Caco-2 (cell line): ENCODE measurements at regions of chr19 and their contacts with region 1.

Region 1: GRCh38 chr19:12806239-12807081 is at the start of gene RNASEH2A:
- DNase-seq: peak; percentile 84 to 90
- H3K4me3 ChIP-seq: peak within 1 kb of the TSS; percentile 73
- H3K4me3 Mint-ChIP-seq: peak within 1 kb of the TSS; percentile 99
- H3K27ac Mint-ChIP-seq: peak within 1 kb of the TSS; percentile 84
- H3K4me1 ChIP-seq: peaks cover 8% of the 10 kb centered on the region; the same call in 1 of the 2 replicates
- H3K4me1 Mint-ChIP-seq: peaks cover 7% of the 10 kb centered on the region
- H3K27me3 ChIP-seq: no peaks in the 10 kb centered on the region
- H3K27me3 Mint-ChIP-seq: no peaks in the 10 kb centered on the region
- CTCF ChIP-seq: no peak
- total RNA-seq, gene RNASEH2A: 30.9 and 37.6 TPM in 2 replicates

Region 2: DNA sequence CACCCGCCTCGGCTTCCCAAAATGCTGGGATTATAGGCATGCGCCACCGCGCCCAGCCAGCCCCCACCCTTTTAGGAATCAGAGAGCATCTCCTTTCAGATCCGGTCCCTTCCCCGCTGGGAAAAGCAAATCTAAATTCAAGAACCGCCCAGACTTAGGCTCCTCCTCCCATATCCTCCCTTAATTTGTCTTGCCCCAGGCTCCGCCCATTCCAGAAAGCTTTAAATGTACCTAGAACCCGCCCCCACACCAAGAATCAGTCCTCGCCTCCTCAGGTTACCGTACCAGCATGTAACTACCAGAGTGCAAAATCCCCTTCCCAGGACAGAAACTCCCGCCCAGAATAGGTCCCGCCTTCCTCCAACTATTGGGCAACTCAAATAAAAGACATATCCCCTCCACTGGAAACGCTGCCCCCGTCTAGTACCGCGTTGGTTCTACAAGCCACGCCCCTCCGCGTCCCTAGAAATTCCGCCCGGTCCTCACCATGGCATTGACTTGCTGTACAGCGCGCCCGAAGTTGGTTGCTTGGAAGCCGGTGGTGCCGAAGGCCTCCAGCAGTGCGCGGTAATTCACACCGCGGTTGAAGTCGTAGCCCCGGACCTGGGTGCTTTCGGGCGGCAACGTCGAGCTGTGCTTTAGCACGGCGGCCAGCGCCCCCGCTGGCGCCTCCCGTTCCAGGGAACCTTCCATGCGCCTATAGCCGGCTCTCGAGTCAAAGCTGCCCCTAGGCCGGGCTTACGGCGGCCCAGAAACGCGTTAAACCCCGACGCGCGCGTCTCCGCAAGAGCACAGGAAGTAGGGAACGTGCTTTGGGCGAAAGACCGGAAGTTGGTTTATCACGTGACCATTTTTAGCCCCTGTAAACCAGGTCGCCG is 125.1 kb before region 1 on chr19 and contains the start of gene DHPS:
- CTCF ChIA-PET with region 1: no interaction called
- POLR2A ChIA-PET with region 1: interaction called, 10 read pairs
- intact Hi-C with region 1: no loop called
- DNase-seq: peak; percentile 91 to 96
- H3K4me3 ChIP-seq: peak within 1 kb of the TSS; percentile 92
- H3K4me3 Mint-ChIP-seq: peak within 1 kb of the TSS; percentile 83
- H3K27ac Mint-ChIP-seq: peak within 1 kb of the TSS; percentile 87
- H3K4me1 ChIP-seq: no peaks in the 10 kb centered on the region
- H3K4me1 Mint-ChIP-seq: peaks cover 2% of the 10 kb centered on the region
- H3K27me3 ChIP-seq: no peaks in the 10 kb centered on the region
- H3K27me3 Mint-ChIP-seq: no peaks in the 10 kb centered on the region
- CTCF ChIP-seq: no peak
- total RNA-seq, gene DHPS: 76.3 and 76.4 TPM in 2 replicates

Region 3: GRCh38 chr19:12789904-12790619 is 16.4 kb before region 1 on chr19:
- CTCF ChIA-PET with region 1: interaction called, 3 read pairs
- POLR2A ChIA-PET with region 1: interaction called, 10 read pairs
- intact Hi-C with region 1: no loop called
- DNase-seq: peak; percentile 95 to 96
- H3K4me3 ChIP-seq: peak overlapping the region; percentile 40
- H3K4me3 Mint-ChIP-seq: peak overlapping the region; percentile 92
- H3K27ac Mint-ChIP-seq: peak overlapping the region; percentile 83
- H3K4me1 ChIP-seq: peaks cover 25% of the 10 kb centered on the region
- H3K4me1 Mint-ChIP-seq: peaks cover 21% of the 10 kb centered on the region
- H3K27me3 ChIP-seq: no peaks in the 10 kb centered on the region
- H3K27me3 Mint-ChIP-seq: no peaks in the 10 kb centered on the region
- CTCF ChIP-seq: no peak

Region 4: DNA sequence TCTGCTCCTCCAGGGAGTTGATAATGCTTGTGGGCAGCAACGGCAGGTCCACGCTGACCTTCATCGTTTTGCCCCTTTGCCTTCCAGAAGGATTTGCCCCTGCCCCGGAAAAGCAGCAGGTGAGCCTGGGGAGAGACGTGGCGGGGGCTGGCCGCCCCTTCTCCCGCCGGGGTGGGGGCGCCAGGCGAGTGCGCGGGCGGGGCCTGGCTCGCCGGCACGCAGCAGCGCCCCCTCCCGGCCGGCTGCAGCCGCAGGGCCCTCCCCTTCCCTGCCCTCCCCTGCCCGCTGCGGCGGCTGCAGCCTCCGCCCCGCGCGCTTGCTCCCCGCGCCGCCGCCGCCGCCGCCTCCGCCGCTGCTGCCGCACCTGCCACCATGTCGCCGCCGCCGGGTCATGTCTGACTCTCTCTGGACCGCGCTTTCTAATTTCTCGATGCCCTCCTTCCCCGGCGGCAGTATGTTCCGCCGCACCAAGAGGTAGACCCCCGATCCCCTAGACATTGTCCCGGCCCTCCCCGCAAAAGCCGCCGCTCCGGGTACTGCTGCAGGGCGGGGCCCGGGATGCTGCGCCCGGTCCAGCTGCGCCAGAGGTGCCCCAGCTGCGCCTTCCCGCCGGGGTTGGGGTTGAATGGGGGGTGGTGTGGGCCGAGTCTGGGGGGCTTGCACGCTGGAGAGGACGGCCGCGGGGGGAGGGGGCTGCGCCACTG is 31.9 kb after region 1 on chr19 and contains the start of gene MAST1:
- CTCF ChIA-PET with region 1: no interaction called
- POLR2A ChIA-PET with region 1: no interaction called
- intact Hi-C with region 1: loop called (anchors 5 kb)
- DNase-seq: peak in 1 of 2 experiments; percentile 74
- H3K4me3 ChIP-seq: peak within 1 kb of the TSS; percentile 45
- H3K4me3 Mint-ChIP-seq: peak within 1 kb of the TSS; percentile 75
- H3K27ac Mint-ChIP-seq: no peak within 1 kb of the TSS
- H3K4me1 ChIP-seq: peaks cover 14% of the 10 kb centered on the region
- H3K4me1 Mint-ChIP-seq: peaks cover 8% of the 10 kb centered on the region
- H3K27me3 ChIP-seq: no peaks in the 10 kb centered on the region
- H3K27me3 Mint-ChIP-seq: peaks cover 15% of the 10 kb centered on the region
- CTCF ChIP-seq: peak in 1 of 2 experiments; percentile 61
- total RNA-seq, gene MAST1: 0.79 and 0.91 TPM in 2 replicates